Activated naive CD8-positive, alpha-beta T cell treated with anti-CD3 and anti-CD28 coated beads, Interleukin-2, amount 10 ng/mL, durations not matched to agents 7 days and 5 days (primary cell): ENCODE measurements at regions of chr2 and their contacts with region 1.

Region 1: DNA sequence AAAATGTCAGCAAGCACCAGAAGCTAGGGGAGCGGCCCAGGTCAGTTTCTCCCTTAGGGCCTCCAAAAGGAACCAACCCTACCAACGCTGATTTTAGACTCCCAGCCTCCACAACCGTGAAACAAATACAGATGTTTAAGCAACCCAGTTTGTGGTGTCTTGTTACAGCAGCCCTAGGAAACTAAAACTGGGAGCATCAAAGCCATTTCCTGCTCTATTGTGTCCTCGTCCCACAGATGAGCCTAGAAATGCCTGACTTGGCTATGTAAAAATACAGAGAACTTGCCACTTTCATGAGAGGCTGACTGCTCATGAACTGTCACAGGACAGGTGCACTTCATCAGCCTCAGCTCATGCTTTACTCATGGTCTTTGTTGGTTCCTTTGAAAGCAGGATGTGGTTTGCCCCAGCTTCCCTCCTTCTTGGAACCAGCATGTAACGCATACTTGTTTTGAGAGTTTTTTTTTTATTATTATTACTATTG is 97.6 kb upstream of the SLC39A10 start:
- DNase-seq: peak; percentile 55
- ATAC-seq: peak; percentile 95
- H3K4me3 Mint-ChIP-seq: peak overlapping the region; percentile 60
- H3K27ac Mint-ChIP-seq: peak overlapping the region; percentile 85
- H3K4me1 Mint-ChIP-seq: peaks cover 59% of the 10 kb centered on the region
- H3K27me3 Mint-ChIP-seq: no peaks in the 10 kb centered on the region

Region 2: GRCh38 chr2:195543902-195544894 is 15.3 kb before region 1 on chr2:
- POLR2A ChIA-PET with region 1: interaction called, 179 read pairs
- DNase-seq: no peak
- ATAC-seq: peak; percentile 10
- H3K4me3 Mint-ChIP-seq: peak overlapping the region; percentile 42
- H3K27ac Mint-ChIP-seq: peak overlapping the region; percentile 80
- H3K4me1 Mint-ChIP-seq: peaks cover 37% of the 10 kb centered on the region
- H3K27me3 Mint-ChIP-seq: no peaks in the 10 kb centered on the region

Region 3: DNA sequence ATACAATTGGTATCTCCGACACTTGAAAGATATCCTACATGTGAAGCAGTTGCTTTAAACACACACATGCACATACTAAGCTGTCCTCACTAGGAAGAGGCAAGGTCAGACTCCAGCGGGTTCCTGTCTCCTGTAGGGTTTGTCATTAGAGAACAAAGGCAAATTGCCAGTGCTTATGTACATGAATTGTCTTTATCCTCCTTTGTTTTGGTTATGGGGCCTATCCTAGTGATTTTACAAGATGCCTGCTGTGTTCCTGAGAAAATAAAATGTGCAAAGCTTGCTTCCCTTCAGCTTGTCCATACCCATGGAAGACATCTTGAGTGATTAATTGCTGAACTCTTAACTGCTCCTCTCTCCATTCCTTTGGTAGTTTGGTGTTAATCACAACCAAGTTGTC is 10.9 kb after region 1 on chr2:
- POLR2A ChIA-PET with region 1: interaction called, 10 read pairs
- DNase-seq: no peak
- ATAC-seq: no peak
- H3K4me3 Mint-ChIP-seq: no peak overlapping the region
- H3K27ac Mint-ChIP-seq: no peak overlapping the region
- H3K4me1 Mint-ChIP-seq: peaks cover 27% of the 10 kb centered on the region
- H3K27me3 Mint-ChIP-seq: no peaks in the 10 kb centered on the region